AG04449 (cell line): ENCODE measurements at regions of chr18 and their contacts with region 1.

Region 1: GRCh38 chr18:44579028-44579702 is 101.5 kb upstream of the SETBP1 start:
- DNase-seq: no peak
- H3K4me3 ChIP-seq: no peak overlapping the region
- CTCF ChIP-seq: peak; percentile 20

Region 2: GRCh38 chr18:44589693-44590355 is 10.7 kb after region 1 on chr18:
- CTCF ChIA-PET with region 1: interaction called, 14 read pairs
- POLR2A ChIA-PET with region 1: interaction called, 5 read pairs
- DNase-seq: no peak
- H3K4me3 ChIP-seq: no peak overlapping the region
- CTCF ChIP-seq: no peak